ENCODE measurements at regions of chr6 and their contacts with region 1.

Region 1: DNA sequence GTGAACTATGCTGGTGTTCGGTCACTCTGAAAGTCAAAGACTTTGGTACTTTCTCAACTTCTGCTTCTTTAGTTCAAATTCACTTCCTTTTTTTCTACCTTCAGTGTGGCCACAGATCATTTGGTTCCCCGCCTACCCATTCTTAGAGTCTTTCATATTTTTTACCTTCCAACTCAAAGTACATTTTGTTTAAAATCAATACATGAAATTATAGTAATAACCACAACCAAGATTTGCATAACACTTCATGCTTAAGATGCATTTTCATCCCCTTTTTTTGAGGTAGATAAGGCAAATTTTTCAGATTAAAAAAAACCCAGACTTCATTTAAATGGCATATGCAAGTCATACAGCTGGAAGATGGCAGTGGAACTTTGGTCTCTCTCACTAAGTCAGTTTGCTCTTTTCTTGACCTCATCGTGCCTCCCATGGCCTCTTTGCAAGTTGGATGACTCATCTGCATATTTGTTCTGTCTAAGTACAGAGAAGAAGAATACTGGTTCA is 11.9 kb upstream of the CNR1 start:
- DNase-seq: peak; percentile 32
- ATAC-seq: peak; percentile 75
- H3K4me3 ChIP-seq: no peak overlapping the region
- H3K27ac ChIP-seq: no peak overlapping the region
- H3K4me1 ChIP-seq: peaks cover 16% of the 10 kb centered on the region; the same call in 1 of the 2 replicates
- H3K27me3 ChIP-seq: no peaks in the 10 kb centered on the region
- CTCF ChIP-seq: no peak
- EP300 ChIP-seq: no peak
- POLR2A ChIP-seq: no peak
- RAD21 ChIP-seq: no peak

Region 2: GRCh38 chr6:87922947-87923330 is 255.1 kb before region 1 on chr6:
- CTCF ChIA-PET with region 1: interaction called, 3 read pairs
- POLR2A ChIA-PET with region 1: no interaction called
- RAD21 ChIA-PET with region 1: interaction called, 7 read pairs
- SMC1A ChIA-PET with region 1: interaction called, 10 read pairs
- in situ Hi-C with region 1: no loop called
- intact Hi-C with region 1: no loop called
- DNase-seq: peak; percentile 86
- ATAC-seq: peak; percentile 75
- H3K4me3 ChIP-seq: no peak overlapping the region
- H3K27ac ChIP-seq: peak overlapping the region; percentile 94
- H3K4me1 ChIP-seq: peaks cover 71% of the 10 kb centered on the region
- H3K27me3 ChIP-seq: no peaks in the 10 kb centered on the region
- CTCF ChIP-seq: no peak
- EP300 ChIP-seq: peak; percentile 84 to 90
- POLR2A ChIP-seq: peak; percentile 34; the same call in 1 of the 2 replicates
- RAD21 ChIP-seq: no peak

Region 3: DNA sequence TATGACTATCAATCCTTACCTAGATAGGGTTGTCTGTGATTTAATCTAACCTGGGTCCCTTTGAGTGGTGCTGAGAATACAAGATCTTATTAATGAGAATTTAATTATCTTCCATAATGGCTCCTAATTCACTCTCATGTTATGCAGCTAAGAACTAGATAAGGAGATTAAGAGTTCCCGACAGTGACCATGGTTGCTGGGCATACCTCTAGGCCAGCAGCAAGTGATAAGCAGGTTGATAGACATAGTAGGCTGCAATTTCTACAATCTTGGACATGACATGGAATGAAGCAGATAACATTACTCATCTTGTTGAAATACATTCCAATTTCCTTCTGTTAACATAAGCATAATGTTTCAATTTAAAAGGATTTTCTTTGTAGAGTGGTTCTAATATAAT is 103.2 kb before region 1 on chr6:
- CTCF ChIA-PET with region 1: no interaction called
- POLR2A ChIA-PET with region 1: no interaction called
- RAD21 ChIA-PET with region 1: no interaction called
- SMC1A ChIA-PET with region 1: no interaction called
- in situ Hi-C with region 1: no loop called
- intact Hi-C with region 1: no loop called
- DNase-seq: no peak
- ATAC-seq: no peak
- H3K4me3 ChIP-seq: no peak overlapping the region
- H3K27ac ChIP-seq: no peak overlapping the region
- H3K4me1 ChIP-seq: no peaks in the 10 kb centered on the region
- H3K27me3 ChIP-seq: no peaks in the 10 kb centered on the region; a peak in 1 of 4 replicates
- CTCF ChIP-seq: no peak
- EP300 ChIP-seq: no peak
- POLR2A ChIP-seq: no peak
- RAD21 ChIP-seq: no peak

Region 4: DNA sequence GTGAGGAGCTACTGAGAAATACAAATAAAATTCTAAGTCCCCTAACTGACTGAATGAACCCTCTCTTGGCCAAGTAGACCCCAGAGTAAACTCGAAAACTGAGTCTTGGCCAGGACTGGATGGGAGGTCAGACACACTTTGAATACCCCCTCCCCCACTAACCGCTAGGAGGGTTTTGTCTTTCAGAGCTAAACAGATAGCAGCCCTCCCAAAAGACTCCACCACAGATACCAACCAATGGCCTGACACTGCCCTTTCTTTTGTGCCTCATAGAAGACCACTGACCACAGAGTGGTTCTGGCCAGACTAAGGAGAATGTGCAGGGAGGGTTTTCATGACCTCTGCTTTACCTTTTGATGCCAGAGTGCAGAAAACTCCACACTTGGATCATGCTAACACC is 88.3 kb before region 1 on chr6:
- CTCF ChIA-PET with region 1: no interaction called
- POLR2A ChIA-PET with region 1: no interaction called
- RAD21 ChIA-PET with region 1: no interaction called
- SMC1A ChIA-PET with region 1: no interaction called
- in situ Hi-C with region 1: no loop called
- intact Hi-C with region 1: no loop called
- DNase-seq: no peak
- ATAC-seq: no peak
- H3K4me3 ChIP-seq: no peak overlapping the region
- H3K27ac ChIP-seq: no peak overlapping the region
- H3K4me1 ChIP-seq: no peaks in the 10 kb centered on the region
- H3K27me3 ChIP-seq: no peaks in the 10 kb centered on the region
- CTCF ChIP-seq: no peak
- EP300 ChIP-seq: no peak
- POLR2A ChIP-seq: no peak
- RAD21 ChIP-seq: no peak

Region 5: DNA sequence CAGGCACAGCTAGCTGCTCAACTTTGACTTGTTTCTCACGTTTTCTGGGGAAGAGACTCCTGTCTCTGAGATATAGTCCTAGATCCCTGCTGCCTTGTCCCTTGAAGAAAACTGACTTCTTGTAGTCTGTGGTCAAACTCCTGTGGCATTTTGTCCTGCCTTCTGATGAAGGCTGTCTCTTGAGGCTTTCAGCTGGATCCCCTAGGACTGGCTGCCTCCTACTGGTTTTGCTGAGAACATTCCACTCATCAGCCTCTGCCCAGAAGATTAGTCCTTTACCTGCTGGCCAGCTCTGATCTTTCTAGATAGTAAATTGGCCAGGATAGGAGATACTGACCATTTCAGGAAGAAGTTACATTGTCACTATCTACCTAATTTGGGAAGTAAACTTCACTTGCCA is 60.1 kb after region 1 on chr6:
- CTCF ChIA-PET with region 1: interaction called, 5 read pairs
- POLR2A ChIA-PET with region 1: no interaction called
- RAD21 ChIA-PET with region 1: interaction called, 12 read pairs
- SMC1A ChIA-PET with region 1: interaction called, 8 read pairs
- in situ Hi-C with region 1: no loop called
- intact Hi-C with region 1: no loop called
- DNase-seq: peak; percentile 33
- ATAC-seq: peak; percentile 92
- H3K4me3 ChIP-seq: no peak overlapping the region
- H3K27ac ChIP-seq: no peak overlapping the region
- H3K4me1 ChIP-seq: peaks cover 3% of the 10 kb centered on the region; the same call in 1 of the 2 replicates
- H3K27me3 ChIP-seq: no peaks in the 10 kb centered on the region
- CTCF ChIP-seq: peak; percentile 64 to 77 (median 66); a peak in 5 of 6 replicates
- EP300 ChIP-seq: no peak
- POLR2A ChIP-seq: no peak
- RAD21 ChIP-seq: peak; percentile 97

Measured in GM12878 (cell line).